AG04449 (cell line): ENCODE measurements at regions of chr4 and their contacts with region 1.

Region 1: GRCh38 chr4:176340871-176341685 is 21.3 kb downstream of the SPCS3 start:
- DNase-seq: no peak
- H3K4me3 ChIP-seq: no peak overlapping the region
- CTCF ChIP-seq: peak; percentile 40

Region 2: GRCh38 chr4:175947117-175947722 is 393.9 kb before region 1 on chr4:
- CTCF ChIA-PET with region 1: interaction called, 29 read pairs
- POLR2A ChIA-PET with region 1: no interaction called
- DNase-seq: peak; percentile 1
- H3K4me3 ChIP-seq: no peak overlapping the region
- CTCF ChIP-seq: peak; percentile 15

Region 3: DNA sequence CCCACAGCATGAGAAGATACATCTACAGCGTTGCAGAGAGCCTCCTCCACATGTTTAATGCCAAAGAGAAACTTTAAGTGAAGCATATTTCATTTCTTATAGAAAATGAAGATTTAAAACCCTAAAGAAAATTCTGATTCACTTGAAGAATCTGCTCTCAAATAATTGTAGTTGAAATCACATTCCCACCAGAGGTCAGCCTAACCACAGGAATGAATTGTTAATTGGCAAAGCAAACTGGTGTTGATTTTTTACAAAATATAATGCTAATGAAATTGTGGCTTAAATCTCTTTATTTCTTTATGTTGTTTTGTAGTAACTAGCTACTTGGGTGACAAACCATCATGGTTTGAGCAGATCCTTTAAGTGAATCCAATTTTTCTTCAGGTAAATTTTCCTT is 306.6 kb before region 1 on chr4:
- CTCF ChIA-PET with region 1: interaction called, 83 read pairs
- POLR2A ChIA-PET with region 1: no interaction called
- DNase-seq: peak; percentile 5
- H3K4me3 ChIP-seq: no peak overlapping the region
- CTCF ChIP-seq: no peak

Region 4: DNA sequence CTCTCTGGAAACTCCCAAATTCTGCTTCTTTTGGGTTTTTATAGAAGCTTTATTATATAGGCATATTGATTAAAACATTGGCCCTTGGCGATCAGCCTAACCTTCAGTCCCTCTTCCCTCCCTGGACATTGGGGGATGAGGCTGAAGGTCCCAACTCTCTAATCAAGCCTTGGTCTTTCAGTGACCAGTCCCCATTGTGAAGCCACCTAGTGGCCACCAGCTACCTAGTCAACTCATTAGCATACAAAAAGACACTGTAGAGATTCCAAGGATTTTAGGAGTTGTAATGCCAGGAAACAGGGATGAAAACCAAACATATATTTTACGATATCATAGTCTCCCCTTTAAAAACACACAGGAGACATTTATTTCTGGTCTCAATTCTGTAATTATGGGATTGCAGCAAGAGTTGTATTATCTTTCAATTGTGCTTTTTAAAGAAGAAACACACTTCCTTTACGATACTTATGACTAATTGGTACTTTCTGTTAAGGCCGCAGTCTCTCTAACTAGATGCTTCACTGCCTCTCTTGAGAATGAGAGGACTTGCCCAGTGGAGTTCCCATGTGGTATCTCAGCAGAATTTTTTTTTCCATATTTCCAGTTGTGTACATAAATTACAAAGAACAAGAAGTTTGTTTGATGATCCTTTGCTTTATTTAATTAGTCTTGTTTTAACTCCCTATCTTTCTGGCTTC is 217.2 kb before region 1 on chr4:
- CTCF ChIA-PET with region 1: interaction called, 18 read pairs
- POLR2A ChIA-PET with region 1: no interaction called
- DNase-seq: no peak
- H3K4me3 ChIP-seq: no peak overlapping the region
- CTCF ChIP-seq: peak; percentile 53

Region 5: DNA sequence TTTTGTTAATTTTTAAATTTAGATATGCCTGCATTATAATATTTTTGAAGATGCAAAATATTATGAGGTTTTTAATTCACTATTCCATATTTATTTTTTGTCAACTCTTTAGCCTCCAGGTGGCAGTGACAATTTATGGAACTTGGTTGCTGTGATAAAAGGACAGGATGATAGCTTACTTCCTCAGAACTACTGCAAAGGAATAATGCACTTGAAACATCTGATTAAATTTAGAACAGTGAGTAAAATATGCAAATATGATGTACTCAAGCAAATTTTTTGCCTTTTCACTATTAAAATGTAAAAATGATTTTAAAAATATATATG is 190.8 kb before region 1 on chr4:
- CTCF ChIA-PET with region 1: interaction called, 55 read pairs
- POLR2A ChIA-PET with region 1: no interaction called
- DNase-seq: no peak
- H3K4me3 ChIP-seq: no peak overlapping the region
- CTCF ChIP-seq: peak; percentile 5

Region 6: GRCh38 chr4:176277162-176277904 is 63.7 kb before region 1 on chr4:
- CTCF ChIA-PET with region 1: interaction called, 12 read pairs
- POLR2A ChIA-PET with region 1: no interaction called
- DNase-seq: no peak
- H3K4me3 ChIP-seq: no peak overlapping the region
- CTCF ChIP-seq: peak; percentile 69

Region 7: DNA sequence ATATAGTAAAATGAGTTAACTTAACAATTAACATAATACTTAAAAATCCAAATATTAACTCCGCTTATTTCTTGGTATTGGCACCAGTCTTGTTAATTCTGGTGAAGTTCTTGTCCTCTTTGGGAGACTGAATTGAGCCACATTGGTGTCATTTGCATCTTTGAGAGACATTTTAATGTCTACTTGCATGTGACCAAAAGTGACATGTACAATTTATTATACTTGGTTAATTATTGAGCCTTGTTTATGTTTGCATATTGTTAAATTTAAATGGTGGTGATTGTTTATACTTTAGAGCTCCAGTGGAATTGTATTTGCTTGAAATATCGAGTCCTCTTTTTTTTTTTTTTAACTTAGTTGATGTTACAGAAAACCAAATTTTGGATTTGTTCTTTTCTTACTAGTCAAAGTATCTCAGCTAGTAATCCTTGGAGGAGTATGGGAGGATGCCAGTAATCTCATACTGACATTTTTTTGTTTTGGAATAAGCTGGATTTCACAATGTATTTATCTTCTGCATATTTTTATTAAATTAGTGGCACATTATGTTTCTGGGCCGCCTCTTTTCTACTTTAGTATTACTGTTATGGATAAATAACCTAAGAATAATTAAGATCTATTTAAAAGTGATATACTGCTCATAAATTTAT is 17.4 kb before region 1 on chr4:
- CTCF ChIA-PET with region 1: interaction called, 40 read pairs
- POLR2A ChIA-PET with region 1: no interaction called
- DNase-seq: no peak
- H3K4me3 ChIP-seq: peak overlapping the region; percentile 13
- CTCF ChIP-seq: no peak